Activated CD8-positive, alpha-beta memory T cell treated with anti-CD3 and anti-CD28 coated beads, Interleukin-2, amount 10 ng/mL, durations not matched to agents 7 days and 5 days (primary cell): ENCODE measurements at regions of chr17 and their contacts with region 1.

Region 1: GRCh38 chr17:7572588-7573323 is 6.7 kb upstream of the CD68 start:
- DNase-seq: peak; percentile 100
- ATAC-seq: peak; percentile 9
- H3K4me3 Mint-ChIP-seq: peak overlapping the region; percentile 95
- H3K27ac Mint-ChIP-seq: peak overlapping the region; percentile 97
- H3K4me1 Mint-ChIP-seq: peaks cover 51% of the 10 kb centered on the region
- H3K27me3 Mint-ChIP-seq: no peaks in the 10 kb centered on the region

Region 2: GRCh38 chr17:7583253-7584109 is 10.7 kb after region 1 on chr17 and contains the start of gene MPDU1:
- CTCF ChIA-PET with region 1: interaction called, 15 read pairs
- DNase-seq: peak; percentile 97
- ATAC-seq: peak; percentile 81
- H3K4me3 Mint-ChIP-seq: peak within 1 kb of the TSS; percentile 84
- H3K27ac Mint-ChIP-seq: peak within 1 kb of the TSS; percentile 99
- H3K4me1 Mint-ChIP-seq: peaks cover 62% of the 10 kb centered on the region
- H3K27me3 Mint-ChIP-seq: no peaks in the 10 kb centered on the region
- total RNA-seq, gene MPDU1: 57.6 to 76.9 TPM

Region 3: DNA sequence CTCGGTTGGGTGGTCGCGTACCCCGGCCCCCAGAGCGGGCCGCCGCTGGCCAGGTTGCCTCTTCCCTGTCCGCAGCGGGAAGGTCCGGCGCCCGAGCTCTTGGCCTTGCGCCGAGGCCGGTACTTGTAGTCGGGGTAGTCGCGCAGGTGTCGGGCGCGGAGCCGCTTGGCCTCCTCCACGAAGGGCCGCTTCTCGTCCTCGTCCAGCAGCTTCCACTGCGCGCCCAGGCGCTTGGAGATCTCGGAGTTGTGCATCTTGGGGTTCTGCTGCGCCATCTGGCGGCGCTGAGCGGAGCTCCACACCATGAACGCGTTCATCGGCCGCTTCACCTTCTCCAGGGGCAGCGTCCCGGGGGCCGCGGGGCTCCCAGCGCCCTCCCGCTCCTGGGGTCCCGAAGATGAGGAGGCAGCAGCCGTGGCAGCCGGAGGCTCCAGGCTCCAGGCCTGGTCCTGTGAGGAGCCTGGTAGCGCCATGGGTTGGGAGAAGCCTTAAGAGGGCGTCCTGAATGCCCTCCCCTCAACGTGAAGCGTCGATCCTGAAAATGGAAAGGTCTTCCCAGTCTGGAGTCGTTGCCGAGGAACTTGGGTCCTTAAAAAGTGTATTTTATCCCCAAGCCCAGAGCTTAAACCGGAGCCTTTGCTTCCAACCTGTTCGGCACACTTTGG is 16.6 kb after region 1 on chr17:
- CTCF ChIA-PET with region 1: interaction called, 15 read pairs
- DNase-seq: peak; percentile 73
- ATAC-seq: peak; percentile 77
- H3K4me3 Mint-ChIP-seq: no peak overlapping the region
- H3K27ac Mint-ChIP-seq: no peak overlapping the region
- H3K4me1 Mint-ChIP-seq: peaks cover 17% of the 10 kb centered on the region
- H3K27me3 Mint-ChIP-seq: no peaks in the 10 kb centered on the region